Motor neuron (in vitro differentiated cells): ENCODE measurements at regions of chr4 and their contacts with region 1.

Region 1: GRCh38 chr4:144754562-144755410 is 108.8 kb downstream of the HHIP start:
- ATAC-seq: peak in 4 of 8 experiments; percentile 28 to 52 (median 46)
- H3K4me3 ChIP-seq: no peak overlapping the region
- H3K27ac ChIP-seq: no peak overlapping the region
- H3K4me1 ChIP-seq: no peaks in the 10 kb centered on the region

Region 2: DNA sequence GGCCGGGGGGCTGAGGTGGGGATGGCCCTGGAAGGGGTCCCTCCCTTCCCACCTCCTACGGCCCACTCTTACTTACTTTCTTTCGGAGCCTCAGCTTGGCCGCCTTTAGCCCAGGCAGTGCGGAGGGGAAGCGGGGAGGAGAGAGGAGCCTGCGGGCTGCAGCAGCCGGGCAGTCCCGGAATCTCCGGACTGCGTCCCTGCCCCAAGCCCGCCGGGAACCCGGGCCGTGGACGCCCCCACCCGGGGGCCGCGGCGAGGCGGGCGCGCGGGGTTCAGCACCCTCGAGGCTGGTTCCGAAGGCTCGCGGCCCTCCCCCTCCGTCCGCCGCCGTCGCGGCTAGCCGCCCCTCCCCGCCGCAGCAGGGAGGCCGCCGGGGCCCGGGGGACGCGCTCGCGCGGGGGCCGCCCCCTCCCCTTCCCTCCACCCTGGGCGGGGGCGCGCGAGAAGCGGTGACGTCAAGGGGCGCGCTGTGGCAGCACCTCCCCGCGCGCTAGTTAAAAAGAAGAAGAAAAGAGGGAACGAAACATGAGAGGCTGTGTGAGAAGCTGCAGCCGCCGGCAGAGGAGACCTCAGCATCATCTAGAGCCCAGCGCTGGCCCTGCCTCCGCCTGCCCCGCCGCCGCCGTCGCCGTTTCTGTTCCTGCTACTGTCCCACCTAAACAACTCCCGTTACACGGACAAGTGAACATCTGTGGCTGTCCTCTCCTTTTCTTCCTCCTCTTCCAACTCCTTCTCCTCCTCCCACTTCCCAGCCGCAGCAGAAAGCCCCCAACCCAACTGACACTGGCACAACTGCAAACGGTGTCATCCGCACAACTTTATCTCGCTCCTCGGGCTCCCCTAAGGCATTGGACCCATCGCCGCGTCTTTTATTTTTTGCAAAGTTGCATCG is 108.9 kb before region 1 on chr4 and contains the start of gene HHIP:
- in situ Hi-C with region 1: loop called in 1 of 9 experiments (anchors 25 kb)
- ATAC-seq: peak; percentile 71 to 89 (median 81)
- H3K4me3 ChIP-seq: peak within 1 kb of the TSS; percentile 46 to 60 (median 52)
- H3K27ac ChIP-seq: peak within 1 kb of the TSS in 1 of 2 donors; percentile 24
- H3K4me1 ChIP-seq: peaks cover 8 to 24% of the 10 kb centered on the region in 2 donors
- total RNA-seq, gene HHIP: 0.25 to 7.8 (median 3.7) TPM